ENCODE measurements at regions of chr15 and their contacts with region 1.

Region 1: GRCh38 chr15:40421246-40422157 is 15.9 kb downstream of the IVD start:
- DNase-seq: peak; percentile 72
- H3K4me3 Mint-ChIP-seq: no peak overlapping the region
- H3K27ac Mint-ChIP-seq: no peak overlapping the region
- H3K4me1 Mint-ChIP-seq: no peaks in the 10 kb centered on the region
- H3K27me3 Mint-ChIP-seq: no peaks in the 10 kb centered on the region

Region 2: GRCh38 chr15:40320931-40321371 is 100.6 kb before region 1 on chr15:
- intact Hi-C with region 1: loop called (anchors 1 kb)
- DNase-seq: peak; percentile 50
- H3K4me3 Mint-ChIP-seq: no peak overlapping the region
- H3K27ac Mint-ChIP-seq: no peak overlapping the region
- H3K4me1 Mint-ChIP-seq: peaks cover 17% of the 10 kb centered on the region
- H3K27me3 Mint-ChIP-seq: peaks cover 35% of the 10 kb centered on the region

Region 3: DNA sequence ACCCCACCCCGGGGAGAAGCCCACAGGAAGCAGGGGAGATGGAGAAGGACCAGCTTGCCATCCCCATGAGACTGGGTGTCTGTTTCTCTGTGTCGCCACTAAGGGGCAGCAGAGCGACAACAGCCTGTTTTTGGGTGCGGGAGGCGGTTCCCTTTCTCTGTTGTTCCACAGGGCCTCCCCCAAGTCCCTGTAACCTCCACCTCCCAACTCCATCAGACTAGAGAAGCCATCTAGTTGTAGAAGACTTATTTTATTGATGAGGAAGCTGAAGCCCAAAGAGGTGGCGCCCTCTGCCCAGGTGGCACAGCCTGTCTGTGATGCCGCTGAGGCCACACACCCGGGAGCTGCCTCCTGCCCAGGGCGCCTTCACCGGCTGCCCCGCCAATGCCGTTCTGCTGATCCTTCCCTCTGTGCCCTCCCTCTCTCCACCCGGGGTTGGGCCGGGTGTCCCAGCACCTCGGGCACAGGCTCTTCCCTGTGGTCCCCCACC is 76.8 kb before region 1 on chr15:
- intact Hi-C with region 1: loop called (anchors 1 kb)
- DNase-seq: peak; percentile 64
- H3K4me3 Mint-ChIP-seq: no peak overlapping the region
- H3K27ac Mint-ChIP-seq: no peak overlapping the region
- H3K4me1 Mint-ChIP-seq: no peaks in the 10 kb centered on the region
- H3K27me3 Mint-ChIP-seq: no peaks in the 10 kb centered on the region

Region 4: DNA sequence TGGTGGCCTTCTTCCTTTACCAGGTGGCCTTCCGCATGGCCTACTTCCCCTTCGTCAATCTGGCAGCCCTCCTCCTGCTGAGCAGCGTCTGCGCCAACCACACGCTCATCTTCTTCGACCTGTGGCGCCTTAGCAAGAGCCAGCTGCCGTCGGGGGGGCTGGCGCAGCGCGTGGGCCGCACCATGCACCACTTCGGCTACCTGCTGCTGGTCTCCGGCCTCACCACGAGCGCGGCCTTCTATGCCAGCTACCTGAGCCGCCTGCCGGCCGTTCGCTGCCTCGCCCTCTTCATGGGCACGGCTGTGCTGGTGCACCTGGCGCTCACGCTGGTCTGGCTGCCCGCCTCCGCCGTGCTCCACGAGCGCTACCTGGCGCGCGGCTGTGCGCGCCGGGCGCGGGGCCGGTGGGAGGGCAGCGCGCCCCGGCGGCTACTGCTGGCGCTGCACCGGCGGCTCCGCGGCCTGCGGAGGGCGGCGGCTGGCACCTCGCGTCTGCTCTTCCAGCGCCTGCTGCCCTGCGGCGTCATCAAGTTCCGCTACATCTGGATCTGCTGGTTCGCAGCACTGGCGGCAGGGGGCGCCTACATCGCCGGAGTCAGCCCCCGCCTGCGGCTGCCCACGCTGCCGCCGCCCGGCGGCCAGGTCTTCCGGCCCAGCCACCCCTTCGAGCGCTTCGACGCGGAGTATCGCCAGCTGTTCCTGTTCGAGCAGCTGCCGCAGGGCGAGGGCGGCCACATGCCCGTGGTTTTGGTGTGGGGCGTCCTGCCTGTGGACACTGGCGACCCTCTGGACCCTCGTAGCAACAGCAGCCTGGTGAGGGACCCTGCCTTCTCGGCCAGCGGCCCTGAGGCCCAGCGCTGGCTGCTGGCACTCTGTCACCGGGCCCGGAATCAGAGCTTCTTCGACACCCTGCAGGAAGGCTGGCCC is 53.6 kb before region 1 on chr15:
- intact Hi-C with region 1: loop called (anchors 1 kb)
- DNase-seq: peak; percentile 88
- H3K4me3 Mint-ChIP-seq: peak overlapping the region; percentile 74
- H3K27ac Mint-ChIP-seq: peak overlapping the region; percentile 46
- H3K4me1 Mint-ChIP-seq: peaks cover 11% of the 10 kb centered on the region
- H3K27me3 Mint-ChIP-seq: peaks cover 23% of the 10 kb centered on the region

Region 5: DNA sequence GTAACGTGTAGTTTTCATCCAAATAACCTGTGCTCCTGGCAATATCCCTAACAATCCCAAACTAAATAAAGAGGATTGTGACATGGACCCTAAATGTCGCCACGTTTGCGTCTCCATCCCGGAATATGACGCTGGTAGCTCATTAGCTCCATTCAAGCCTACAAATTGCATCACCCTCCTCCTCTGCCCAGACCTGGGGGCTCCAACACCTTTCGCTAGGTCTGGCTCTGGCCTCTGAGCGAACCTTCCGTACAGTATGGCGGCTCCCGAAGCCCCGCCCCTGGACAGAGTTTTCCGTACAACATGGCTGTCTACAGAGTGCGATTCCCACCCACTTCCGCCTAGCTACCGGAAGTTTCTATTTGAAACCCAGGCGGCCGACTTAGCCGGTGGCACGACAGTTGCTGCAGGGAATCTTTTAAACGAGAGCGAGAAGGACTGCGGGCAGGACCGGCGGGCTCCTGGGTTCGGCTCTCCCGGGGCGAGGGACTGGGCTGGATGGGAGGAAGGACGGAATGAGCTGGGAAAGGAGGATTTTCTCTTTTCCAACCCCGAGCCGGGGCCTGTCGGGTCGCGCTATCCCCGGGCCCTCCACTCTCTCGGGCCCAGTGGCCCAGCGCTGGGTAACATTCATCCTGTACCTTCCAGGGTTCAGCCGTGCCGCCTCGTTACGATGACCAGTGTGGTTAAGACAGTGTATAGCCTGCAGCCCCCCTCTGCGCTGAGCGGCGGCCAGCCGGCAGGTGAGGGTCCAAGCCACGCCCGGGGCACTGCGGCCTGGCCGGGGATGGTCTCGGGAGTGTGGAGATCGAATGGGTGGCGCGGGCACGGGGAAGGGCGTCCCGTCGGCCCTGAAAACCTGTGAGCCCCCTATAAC is 38.7 kb before region 1 on chr15 and contains the start of gene KNSTRN:
- intact Hi-C with region 1: loop called (anchors 5 kb)
- DNase-seq: peak; percentile 89
- H3K4me3 Mint-ChIP-seq: peak within 1 kb of the TSS; percentile 94
- H3K27ac Mint-ChIP-seq: peak within 1 kb of the TSS; percentile 91
- H3K4me1 Mint-ChIP-seq: peaks cover 23% of the 10 kb centered on the region
- H3K27me3 Mint-ChIP-seq: peaks cover 7% of the 10 kb centered on the region
- total RNA-seq, gene KNSTRN: 48.1 and 49.9 TPM in 2 replicates

Measured in activated T-helper 2 cell treated with anti-CD3 and anti-CD28 coated beads, Interferon-gamma antibody, Interleukin-2, Interleukin-4, amounts not matched to agents 10 μg/mL and 5 μg/mL and 100 μg/mL, durations not matched to agents 14 hours and 24 hours and 36 hours (primary cell).